ENCODE measurements at regions of chr9 and their contacts with region 1.

Region 1: GRCh38 chr9:36946653-36947052 is 87.4 kb downstream of the PAX5 start:
- DNase-seq: no peak
- H3K4me3 ChIP-seq: no peak overlapping the region
- H3K27ac ChIP-seq: no peak overlapping the region
- H3K4me1 ChIP-seq: no peaks in the 10 kb centered on the region
- H3K27me3 ChIP-seq: no peaks in the 10 kb centered on the region
- CTCF ChIP-seq: no peak
- EP300 ChIP-seq: no peak
- POLR2A ChIP-seq: no peak

Region 2: GRCh38 chr9:36934478-36935065 is 12.1 kb before region 1 on chr9:
- intact Hi-C with region 1: loop called in 1 of 4 experiments (anchors 1 kb)
- DNase-seq: no peak
- H3K4me3 ChIP-seq: no peak overlapping the region
- H3K27ac ChIP-seq: no peak overlapping the region
- H3K4me1 ChIP-seq: no peaks in the 10 kb centered on the region
- H3K27me3 ChIP-seq: no peaks in the 10 kb centered on the region
- CTCF ChIP-seq: no peak
- EP300 ChIP-seq: no peak
- POLR2A ChIP-seq: no peak

Measured in ovary (tissue), 10 donors.